CD14-positive monocyte (primary cell): ENCODE measurements at regions of chr18 and their contacts with region 1.

Region 1: GRCh38 chr18:37922162-37922561 is 356.6 kb upstream of the CELF4 start:
- DNase-seq: no peak
- H3K4me3 ChIP-seq: no peak overlapping the region
- H3K4me3 Mint-ChIP-seq: no peak overlapping the region
- H3K27ac ChIP-seq: no peak overlapping the region
- H3K27ac Mint-ChIP-seq: no peak overlapping the region
- H3K4me1 ChIP-seq: no peaks in the 10 kb centered on the region
- H3K4me1 Mint-ChIP-seq: no peaks in the 10 kb centered on the region
- H3K27me3 ChIP-seq: no peaks in the 10 kb centered on the region
- H3K27me3 Mint-ChIP-seq: no peaks in the 10 kb centered on the region
- CTCF ChIP-seq: no peak

Region 2: GRCh38 chr18:37985126-37985525 is 63.0 kb after region 1 on chr18:
- intact Hi-C with region 1: loop called in 1 of 2 experiments (anchors 10 kb)
- DNase-seq: no peak
- H3K4me3 ChIP-seq: no peak overlapping the region
- H3K4me3 Mint-ChIP-seq: no peak overlapping the region
- H3K27ac ChIP-seq: no peak overlapping the region
- H3K27ac Mint-ChIP-seq: no peak overlapping the region
- H3K4me1 ChIP-seq: no peaks in the 10 kb centered on the region
- H3K4me1 Mint-ChIP-seq: no peaks in the 10 kb centered on the region
- H3K27me3 ChIP-seq: no peaks in the 10 kb centered on the region
- H3K27me3 Mint-ChIP-seq: no peaks in the 10 kb centered on the region
- CTCF ChIP-seq: no peak